Tibial artery (tissue), 4 donors: ENCODE measurements at regions of chr2 and their contacts with region 1.

Region 1: DNA sequence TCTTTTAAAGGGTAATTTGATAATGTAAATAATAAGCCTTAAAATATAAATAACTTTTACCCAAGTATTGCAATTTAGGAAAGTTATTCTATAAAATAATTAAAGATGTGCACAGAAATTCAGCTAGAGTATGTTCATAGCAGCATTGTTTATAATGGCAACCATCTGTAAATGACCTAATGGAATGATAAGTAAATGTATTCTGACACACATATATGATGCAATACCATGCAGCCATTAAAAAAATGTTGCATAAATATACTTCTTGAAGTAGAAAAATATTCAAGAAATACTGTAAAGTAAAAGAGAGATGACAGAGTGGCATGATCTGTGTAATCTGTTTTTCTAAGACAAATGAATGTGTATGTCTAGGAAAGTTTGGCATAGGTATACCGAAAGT is 545.7 kb downstream of the ZEB2 start:
- DNase-seq: no peak
- H3K4me3 ChIP-seq: no peak overlapping the region
- H3K27ac ChIP-seq: no peak overlapping the region
- H3K4me1 ChIP-seq: no peaks in the 10 kb centered on the region
- H3K27me3 ChIP-seq: no peaks in the 10 kb centered on the region
- CTCF ChIP-seq: no peak

Region 2: GRCh38 chr2:143121079-143121478 is 853.2 kb before region 1 on chr2:
- intact Hi-C with region 1: loop called (anchors 5 kb)
- DNase-seq: no peak
- H3K4me3 ChIP-seq: no peak overlapping the region
- H3K27ac ChIP-seq: no peak overlapping the region
- H3K4me1 ChIP-seq: no peaks in the 10 kb centered on the region
- H3K27me3 ChIP-seq: no peaks in the 10 kb centered on the region
- CTCF ChIP-seq: no peak

Region 3: DNA sequence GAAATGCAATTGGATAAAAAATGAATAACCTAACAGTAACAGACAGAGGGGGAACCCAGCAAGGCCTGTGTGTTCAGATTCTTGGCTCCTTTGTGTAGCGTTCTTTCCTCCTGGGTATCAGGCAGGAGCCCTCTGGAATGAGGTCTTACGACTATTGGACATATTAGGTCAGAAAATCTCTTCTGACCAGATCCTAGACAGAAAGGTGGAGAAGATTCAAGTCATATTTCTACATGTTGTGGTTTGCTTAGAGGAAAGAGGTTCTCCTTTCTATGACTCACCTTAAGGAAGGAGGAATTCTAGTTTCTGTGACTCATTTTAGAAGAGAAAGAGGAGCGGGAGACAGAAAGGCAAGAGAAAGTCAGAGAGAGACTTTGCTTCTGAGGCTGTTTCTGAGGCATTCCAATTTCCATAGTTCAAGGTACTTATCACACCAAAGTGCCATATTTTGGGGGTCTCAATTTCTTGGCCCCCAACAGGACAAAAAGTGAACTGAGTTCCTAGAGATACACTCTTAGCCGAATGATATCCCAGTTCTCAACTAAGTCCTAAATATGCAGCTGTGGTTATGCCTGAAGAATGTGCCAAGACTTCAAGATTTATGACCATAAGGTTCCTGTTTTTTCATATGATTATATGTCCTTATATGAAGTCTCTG is 72.9 kb before region 1 on chr2:
- intact Hi-C with region 1: no loop called
- DNase-seq: no peak
- H3K4me3 ChIP-seq: no peak overlapping the region
- H3K27ac ChIP-seq: peak overlapping the region in 1 of 2 donors; percentile 26
- H3K4me1 ChIP-seq: peaks cover 0 to 12% (median 0%) of the 10 kb centered on the region in 4 donors
- H3K27me3 ChIP-seq: no peaks in the 10 kb centered on the region
- CTCF ChIP-seq: no peak